Dendritic cell treated with granulocyte-macrophage colony-stimulating factor and Interleukin-4, amounts not matched to agents 40 ng/mL and 50 ng/mL, for 4 days (primary cell): ENCODE measurements at regions of chr19 and their contacts with region 1.

Region 1: DNA sequence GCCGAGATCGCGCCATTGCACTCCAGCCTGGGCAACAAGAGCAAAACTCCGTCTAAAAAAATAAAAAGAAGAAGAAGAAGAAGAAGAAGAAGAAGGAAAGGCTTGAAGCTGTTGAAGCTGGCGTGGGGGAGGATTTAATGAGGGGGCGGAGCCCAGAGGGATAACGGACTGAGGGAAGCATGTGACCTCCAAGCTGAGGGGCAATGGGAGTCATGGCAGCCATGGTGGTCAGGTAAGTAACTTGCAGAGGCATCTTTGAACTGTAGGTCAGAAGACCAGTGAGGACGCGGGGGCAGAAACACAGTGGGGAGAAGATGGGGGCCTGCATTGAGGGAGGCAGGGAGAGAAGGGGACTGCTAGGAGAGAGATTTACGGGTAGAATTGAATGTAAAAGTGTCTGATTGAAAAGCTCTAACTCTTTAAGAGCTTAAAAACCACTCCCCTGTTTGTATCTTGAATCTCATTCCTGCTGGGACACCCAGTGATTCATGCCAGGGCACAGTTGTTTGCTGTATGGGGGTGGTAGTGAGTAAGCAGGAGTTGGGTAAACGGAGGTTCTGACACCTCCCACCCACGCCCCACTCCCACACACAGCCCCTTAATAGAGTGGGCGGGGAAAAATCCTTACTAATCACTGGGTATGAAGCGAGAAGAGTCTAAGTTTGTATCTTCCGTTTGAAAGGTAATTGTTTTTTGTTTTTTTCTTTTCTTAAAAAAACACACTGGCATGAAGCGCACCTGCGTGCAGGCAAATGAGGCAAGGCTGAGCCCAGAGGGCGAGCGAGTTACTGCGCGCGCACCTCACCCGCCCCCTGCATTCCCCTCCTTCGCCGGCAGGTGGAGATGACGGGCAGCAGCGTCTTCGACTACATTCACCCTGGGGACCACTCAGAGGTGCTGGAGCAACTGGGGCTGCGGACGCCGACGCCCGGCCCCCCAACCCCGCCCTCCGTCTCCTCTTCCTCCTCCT is 13.0 kb downstream of the TMEM160 start:
- H3K4me3 Mint-ChIP-seq: peak overlapping the region; percentile 73
- H3K27ac Mint-ChIP-seq: peak overlapping the region; percentile 53
- H3K4me1 Mint-ChIP-seq: peaks cover 21% of the 10 kb centered on the region
- H3K27me3 Mint-ChIP-seq: peaks cover 56% of the 10 kb centered on the region

Region 2: DNA sequence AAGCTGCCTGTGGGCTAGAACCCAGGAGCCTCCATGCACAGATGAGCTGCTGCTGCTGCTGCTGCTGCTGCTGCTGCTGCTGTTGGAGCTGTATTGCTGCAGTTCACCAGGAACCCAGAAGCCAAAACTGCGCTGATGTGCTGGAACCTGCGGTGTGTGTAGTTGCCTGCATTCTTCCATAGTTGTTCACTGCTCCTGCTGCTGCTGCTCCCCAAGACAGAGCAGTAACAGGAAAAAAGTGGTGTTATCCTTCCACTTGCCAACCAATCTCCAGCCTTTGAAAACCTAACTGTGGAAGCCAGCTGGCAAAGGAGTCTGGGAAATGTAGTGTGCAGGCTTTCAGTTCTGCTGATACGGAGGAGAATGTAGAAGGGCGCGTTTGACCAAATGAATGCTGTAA is 136.7 kb before region 1 on chr19:
- intact Hi-C with region 1: no loop called
- H3K4me3 Mint-ChIP-seq: no peak overlapping the region
- H3K27ac Mint-ChIP-seq: no peak overlapping the region
- H3K4me1 Mint-ChIP-seq: peaks cover 13% of the 10 kb centered on the region
- H3K27me3 Mint-ChIP-seq: no peaks in the 10 kb centered on the region

Region 3: DNA sequence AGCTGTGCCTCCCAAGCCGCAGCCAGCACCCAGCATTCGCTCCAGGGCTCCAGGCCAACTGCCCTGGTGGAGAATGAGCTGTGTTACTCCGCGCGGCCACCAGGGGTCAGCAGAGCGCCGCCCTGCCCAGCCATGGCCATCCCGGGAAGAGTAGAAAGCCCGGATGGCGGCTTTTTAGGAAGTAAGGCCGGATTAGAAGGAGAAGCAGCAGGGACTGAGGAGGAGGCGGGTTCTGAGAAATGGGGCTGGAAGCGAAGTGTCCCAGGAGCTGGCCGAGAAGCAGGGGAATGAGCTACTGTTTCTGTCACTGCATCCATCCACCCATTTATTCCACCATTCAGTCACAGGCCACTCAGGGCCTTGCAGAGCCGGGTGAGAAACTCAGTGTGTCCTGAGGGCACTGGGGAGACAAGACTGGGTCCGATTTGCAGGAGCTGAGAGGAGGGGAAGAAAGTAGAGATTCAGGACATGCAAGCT is 22.3 kb before region 1 on chr19:
- intact Hi-C with region 1: loop called (anchors 2 kb)
- H3K4me3 Mint-ChIP-seq: no peak overlapping the region
- H3K27ac Mint-ChIP-seq: no peak overlapping the region
- H3K4me1 Mint-ChIP-seq: peaks cover 12% of the 10 kb centered on the region
- H3K27me3 Mint-ChIP-seq: peaks cover 57% of the 10 kb centered on the region

Region 4: GRCh38 chr19:47124937-47125668 is 89.7 kb after region 1 on chr19:
- intact Hi-C with region 1: loop called (anchors 5 kb)
- H3K4me3 Mint-ChIP-seq: no peak overlapping the region
- H3K27ac Mint-ChIP-seq: no peak overlapping the region
- H3K4me1 Mint-ChIP-seq: peaks cover 5% of the 10 kb centered on the region
- H3K27me3 Mint-ChIP-seq: peaks cover 7% of the 10 kb centered on the region